ENCODE measurements at regions of chr6 and their contacts with region 1.

Region 1: DNA sequence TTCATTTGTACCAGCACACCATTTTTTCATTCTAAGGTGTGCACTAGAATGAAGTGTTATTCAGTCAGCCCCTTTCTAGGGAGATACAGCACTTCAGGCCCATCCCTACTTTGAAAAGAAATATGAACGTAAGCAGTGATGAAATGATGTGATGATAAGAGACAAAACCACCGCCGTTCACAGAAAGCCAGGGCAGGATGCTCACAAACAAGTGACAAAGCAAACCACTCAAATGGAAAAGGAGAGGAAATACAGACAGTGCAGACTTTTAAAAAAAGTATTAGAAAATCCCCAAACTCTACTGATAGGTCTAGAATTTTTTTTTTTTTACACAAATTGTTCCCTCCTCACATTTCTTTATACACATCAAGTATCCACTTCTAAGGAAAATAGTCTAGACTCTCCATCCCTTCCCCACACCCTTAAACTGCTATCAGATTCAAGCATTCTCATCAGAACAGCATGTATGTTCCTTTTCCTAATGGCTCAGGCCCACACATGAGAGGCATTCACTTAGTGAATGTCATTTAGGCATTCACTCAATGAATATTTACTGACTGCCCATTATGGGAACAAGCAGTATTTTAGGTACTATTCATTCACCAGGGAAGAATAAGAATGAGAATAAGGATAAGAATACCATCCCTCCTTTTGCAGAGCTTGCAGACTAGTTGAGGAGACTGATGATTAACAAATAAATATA is 243.5 kb downstream of the GMPR start:
- DNase-seq: peak; percentile 45
- ATAC-seq: peak; percentile 72
- H3K4me3 ChIP-seq: no peak overlapping the region
- H3K4me3 Mint-ChIP-seq: peak overlapping the region; percentile 47
- H3K27ac ChIP-seq: no peak overlapping the region
- H3K27ac Mint-ChIP-seq: peak overlapping the region; percentile 53
- H3K4me1 ChIP-seq: peaks cover under 1 to 13% of the 10 kb centered on the region in 2 donors
- H3K4me1 Mint-ChIP-seq: peaks cover 41% of the 10 kb centered on the region
- H3K27me3 ChIP-seq: no peaks in the 10 kb centered on the region
- H3K27me3 Mint-ChIP-seq: no peaks in the 10 kb centered on the region
- CTCF ChIP-seq: no peak

Region 2: DNA sequence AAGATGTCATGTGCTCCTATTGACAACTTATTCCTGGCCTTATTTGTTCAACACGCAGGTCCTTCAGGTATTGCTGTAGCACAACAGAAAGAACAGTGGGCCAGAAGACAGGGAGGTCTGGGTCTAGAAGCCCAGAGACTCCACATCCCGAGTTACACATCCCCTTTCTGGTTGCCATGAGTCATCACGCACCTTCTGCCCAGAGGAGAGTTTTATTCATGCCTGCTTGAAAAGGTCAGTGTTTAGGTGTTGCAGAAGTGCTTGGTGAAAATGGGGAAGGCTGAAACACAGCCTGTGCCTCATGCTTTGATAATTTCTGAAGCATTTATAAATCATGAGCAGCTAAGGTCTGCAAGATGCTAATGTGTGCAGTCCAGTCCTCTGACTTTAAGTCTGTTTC is 12.9 kb after region 1 on chr6:
- CTCF ChIA-PET with region 1: interaction called, 4 read pairs
- POLR2A ChIA-PET with region 1: no interaction called
- intact Hi-C with region 1: loop called (anchors 2 kb)
- DNase-seq: peak; percentile 35
- ATAC-seq: peak; percentile 87
- H3K4me3 ChIP-seq: no peak overlapping the region
- H3K4me3 Mint-ChIP-seq: peak overlapping the region; percentile 46
- H3K27ac ChIP-seq: no peak overlapping the region
- H3K27ac Mint-ChIP-seq: peak overlapping the region; percentile 75
- H3K4me1 ChIP-seq: peaks cover 5 to 15% of the 10 kb centered on the region in 2 donors
- H3K4me1 Mint-ChIP-seq: peaks cover 34% of the 10 kb centered on the region
- H3K27me3 ChIP-seq: no peaks in the 10 kb centered on the region
- H3K27me3 Mint-ChIP-seq: no peaks in the 10 kb centered on the region
- CTCF ChIP-seq: no peak

Measured in B cell (primary cell).